Left ventricle myocardium inferior (tissue), 1 donor: ENCODE measurements at regions of chr6 and their contacts with region 1.

Region 1: GRCh38 chr6:145749632-145750031 is 14.3 kb upstream of the EPM2A start:
- DNase-seq: no peak
- H3K4me3 ChIP-seq: no peak overlapping the region
- H3K27ac ChIP-seq: no peak overlapping the region
- H3K4me1 ChIP-seq: peaks cover 7% of the 10 kb centered on the region
- H3K27me3 ChIP-seq: no peaks in the 10 kb centered on the region
- CTCF ChIP-seq: no peak

Region 2: DNA sequence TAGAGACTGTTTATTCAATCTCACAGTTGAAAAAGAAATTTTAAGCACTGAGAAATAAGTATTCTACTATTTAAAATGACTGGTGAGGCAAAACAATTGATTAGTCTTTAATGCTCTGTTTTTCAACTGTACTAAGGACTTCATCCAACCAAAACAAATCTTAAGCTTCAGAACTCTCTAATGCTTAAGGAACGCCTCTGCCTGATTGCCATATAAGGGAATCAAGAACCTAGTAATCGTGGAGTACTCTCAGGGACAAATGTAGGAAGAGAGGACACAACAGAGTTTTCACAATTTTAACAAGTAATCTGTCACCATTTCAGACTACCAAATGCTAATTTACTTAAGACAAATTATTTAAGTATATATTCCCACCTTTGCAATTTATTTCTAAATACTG is 48.9 kb after region 1 on chr6:
- intact Hi-C with region 1: loop called (anchors 10 kb)
- DNase-seq: no peak
- H3K4me3 ChIP-seq: no peak overlapping the region
- H3K27ac ChIP-seq: no peak overlapping the region
- H3K4me1 ChIP-seq: peaks cover 50% of the 10 kb centered on the region
- H3K27me3 ChIP-seq: no peaks in the 10 kb centered on the region
- CTCF ChIP-seq: no peak